ENCODE measurements at regions of chr12 and their contacts with region 1.

Region 1: GRCh38 chr12:54368709-54369583 is 4.7 kb upstream of the GPR84 start:
- DNase-seq: peak; percentile 85
- CTCF ChIP-seq: peak; percentile 97

Region 2: GRCh38 chr12:54220092-54220557 is 148.8 kb before region 1 on chr12:
- in situ Hi-C with region 1: loop called (anchors 10 kb)
- DNase-seq: peak; percentile 69
- CTCF ChIP-seq: peak; percentile 90

Region 3: DNA sequence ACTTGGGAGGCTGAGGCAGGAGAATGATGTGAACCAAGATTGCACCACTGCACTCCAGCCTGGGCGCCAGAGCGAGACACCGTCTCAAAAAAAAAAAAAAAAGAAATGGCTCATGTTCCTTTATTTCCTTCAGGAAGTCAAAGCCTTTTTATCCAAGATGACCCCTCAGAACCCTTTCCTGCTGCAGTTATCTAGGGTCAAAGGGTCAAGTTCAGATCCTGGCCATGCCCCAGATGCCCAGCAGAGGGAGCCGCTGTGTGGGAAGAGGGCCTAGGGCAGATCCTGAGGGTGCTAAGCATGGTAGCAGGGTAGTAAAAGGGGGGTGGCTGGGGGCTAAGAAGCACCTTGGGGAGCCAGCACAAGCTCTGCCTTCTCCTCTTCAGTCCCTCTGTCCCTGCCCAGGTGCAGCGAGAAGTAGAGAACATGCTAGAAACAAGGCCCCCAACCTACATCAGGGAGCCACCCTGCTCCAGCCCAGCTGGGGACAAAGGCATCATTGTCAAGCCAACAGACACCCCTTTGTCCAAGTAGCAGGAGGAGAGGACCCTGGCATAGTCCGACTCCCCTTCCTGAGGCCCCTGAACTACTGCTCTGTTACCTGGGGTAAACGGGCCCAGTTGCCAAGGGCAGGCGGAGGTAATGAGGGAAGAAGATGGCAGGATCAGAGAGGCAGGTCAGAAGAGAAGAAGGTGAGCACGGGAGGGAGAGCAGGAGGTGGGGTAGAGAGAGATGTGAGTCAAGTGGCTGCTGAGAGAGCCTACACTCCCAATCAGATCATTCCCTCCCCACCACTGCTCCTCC is 74.6 kb before region 1 on chr12:
- in situ Hi-C with region 1: loop called (anchors 10 kb)
- DNase-seq: peak; percentile 71
- CTCF ChIP-seq: peak; percentile 86